K562 (cell line): ENCODE measurements at regions of chr9 and their contacts with region 1.

Region 1: DNA sequence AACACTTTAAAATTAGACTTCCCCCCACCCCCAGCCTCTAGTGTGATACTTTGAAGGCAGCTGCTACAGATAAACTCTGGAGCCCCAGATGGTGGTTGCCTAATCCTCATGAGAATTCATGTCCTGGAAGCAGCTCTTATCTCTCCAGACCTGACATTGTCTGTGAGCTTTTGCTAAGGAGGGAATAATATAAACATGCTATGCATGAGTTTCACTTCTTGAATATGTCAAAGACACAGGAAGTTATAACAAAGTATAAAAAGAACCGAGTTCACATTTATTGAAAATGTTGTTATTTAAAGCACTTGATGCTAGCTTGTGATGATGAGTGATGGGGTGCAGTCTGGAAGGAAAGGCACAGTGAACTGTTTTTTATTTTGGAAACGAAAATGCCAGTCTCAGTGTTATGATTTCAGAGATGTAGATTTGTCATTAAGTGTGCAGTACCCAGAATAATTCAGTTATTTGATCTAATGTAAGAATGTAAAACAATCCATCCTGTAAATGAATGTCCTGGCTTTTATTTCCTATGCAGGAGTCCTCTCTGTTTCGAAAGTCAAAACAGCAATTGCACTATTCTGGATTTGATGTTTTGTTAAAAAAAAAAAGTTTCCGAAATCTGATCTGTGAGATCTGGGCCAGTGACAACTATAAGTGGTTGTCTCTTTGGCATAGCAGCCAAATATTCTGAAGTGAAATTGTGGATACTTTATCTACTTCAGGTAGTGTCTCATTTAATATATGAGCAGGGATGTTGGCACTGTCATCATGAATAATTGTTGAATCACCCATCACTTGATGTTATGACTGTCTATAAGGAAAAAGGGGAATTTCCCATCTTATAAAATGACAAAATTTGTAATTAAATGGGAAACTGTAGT is 77.0 kb downstream of the ZCCHC7 start:
- DNase-seq: peak; percentile 82 to 96 (median 90)
- ATAC-seq: peak; percentile 83
- H3K4me3 ChIP-seq: peak overlapping the region; percentile 5; the same call in 1 of the 2 replicates
- H3K27ac ChIP-seq: peak overlapping the region; percentile 62
- H3K4me1 ChIP-seq: peaks cover 23 to 65% of the 10 kb centered on the region in 2 experiments
- H3K27me3 ChIP-seq: no peaks in the 10 kb centered on the region
- CTCF ChIP-seq: no peak
- EP300 ChIP-seq: peak; percentile 99
- POLR2A ChIP-seq: no peak
- RAD21 ChIP-seq: no peak

Region 2: DNA sequence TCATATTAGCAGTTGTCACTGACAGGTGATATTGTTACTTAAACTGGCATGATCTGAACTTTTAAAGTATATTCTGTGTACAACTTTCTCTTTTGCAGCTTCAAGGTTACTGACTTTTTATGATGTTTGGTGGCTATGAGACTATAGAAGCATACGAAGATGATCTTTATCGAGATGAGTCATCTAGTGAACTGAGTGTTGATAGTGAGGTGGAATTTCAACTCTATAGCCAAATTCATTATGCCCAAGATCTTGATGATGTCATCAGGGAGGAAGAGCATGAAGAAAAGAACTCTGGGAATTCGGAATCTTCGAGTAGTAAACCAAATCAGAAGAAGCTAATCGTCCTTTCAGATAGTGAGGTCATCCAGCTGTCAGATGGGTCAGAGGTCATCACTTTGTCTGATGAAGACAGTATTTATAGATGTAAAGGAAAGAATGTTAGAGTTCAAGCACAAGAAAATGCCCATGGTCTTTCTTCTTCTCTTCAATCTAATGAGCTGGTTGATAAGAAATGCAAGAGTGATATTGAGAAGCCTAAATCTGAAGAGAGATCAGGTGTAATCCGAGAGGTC is 71.1 kb before region 1 on chr9:
- CTCF ChIA-PET with region 1: no interaction called
- POLR2A ChIA-PET with region 1: interaction called, 16 read pairs
- in situ Hi-C with region 1: no loop called
- intact Hi-C with region 1: loop called (anchors 5 kb)
- DNase-seq: no peak
- ATAC-seq: no peak
- H3K4me3 ChIP-seq: no peak overlapping the region
- H3K27ac ChIP-seq: no peak overlapping the region; the same call in 2 of the 3 replicates
- H3K4me1 ChIP-seq: peaks cover 4 to 11% of the 10 kb centered on the region in 2 experiments; a peak in 4 of 5 replicates
- H3K27me3 ChIP-seq: no peaks in the 10 kb centered on the region
- CTCF ChIP-seq: no peak
- EP300 ChIP-seq: no peak
- POLR2A ChIP-seq: no peak
- RAD21 ChIP-seq: no peak

Region 3: GRCh38 chr9:37248651-37249163 is 51.3 kb after region 1 on chr9:
- CTCF ChIA-PET with region 1: no interaction called
- POLR2A ChIA-PET with region 1: interaction called, 3 read pairs
- in situ Hi-C with region 1: no loop called
- intact Hi-C with region 1: loop called (anchors 5 kb)
- DNase-seq: peak in 1 of 4 experiments; percentile 38
- ATAC-seq: no peak
- H3K4me3 ChIP-seq: no peak overlapping the region
- H3K27ac ChIP-seq: peak overlapping the region; percentile 60; the same call in 2 of the 3 replicates
- H3K4me1 ChIP-seq: peaks cover 5 to 38% of the 10 kb centered on the region in 2 experiments; a peak in 4 of 5 replicates
- H3K27me3 ChIP-seq: no peaks in the 10 kb centered on the region
- CTCF ChIP-seq: no peak
- EP300 ChIP-seq: peak; percentile 15; the same call in 1 of the 2 replicates
- POLR2A ChIP-seq: no peak
- RAD21 ChIP-seq: no peak

Region 4: DNA sequence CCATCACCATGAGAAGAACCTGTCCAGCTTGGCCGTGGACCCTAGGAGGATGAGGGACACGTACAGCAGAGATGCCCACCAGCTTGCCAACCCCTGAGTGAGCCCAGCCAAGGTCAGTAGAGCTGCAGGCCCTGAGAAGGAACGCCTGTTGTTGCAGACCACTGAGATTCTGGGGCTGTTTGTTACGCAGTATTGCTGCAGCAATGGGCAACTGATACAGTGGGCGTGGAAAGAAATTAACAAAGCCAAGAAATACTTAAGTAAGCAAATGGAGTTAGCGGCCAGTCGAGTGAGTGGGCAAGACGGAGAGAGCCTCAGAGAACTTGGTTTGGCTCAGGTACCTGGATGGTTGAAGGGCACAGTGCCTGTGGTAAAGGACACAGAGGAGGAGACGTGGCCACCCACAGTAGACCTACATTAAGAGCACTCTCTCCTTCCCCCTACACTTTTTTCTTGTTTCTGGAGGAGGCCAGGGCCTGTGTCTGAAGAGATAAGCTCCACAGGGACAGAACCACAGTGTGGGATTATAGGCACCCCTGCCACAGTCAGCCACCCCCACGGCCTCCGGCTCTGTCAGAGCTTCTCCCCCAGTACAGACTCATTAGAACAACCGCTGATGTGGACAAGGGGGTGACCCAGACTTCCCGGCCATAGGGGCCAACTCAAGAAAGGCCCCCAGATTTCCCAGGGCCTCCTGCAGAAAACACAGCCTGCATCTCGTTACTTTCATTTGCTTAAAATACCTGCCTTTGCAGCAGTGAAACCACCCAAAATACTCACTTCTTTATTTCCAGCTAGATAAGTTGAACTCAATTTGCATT is 185.0 kb after region 1 on chr9:
- CTCF ChIA-PET with region 1: no interaction called
- POLR2A ChIA-PET with region 1: no interaction called
- in situ Hi-C with region 1: no loop called
- intact Hi-C with region 1: loop called (anchors 10 kb)
- DNase-seq: peak in 3 of 4 experiments; percentile 41 to 82 (median 79)
- ATAC-seq: peak; percentile 81
- H3K4me3 ChIP-seq: no peak overlapping the region
- H3K27ac ChIP-seq: peak overlapping the region; percentile 44; the same call in 1 of the 3 replicates
- H3K4me1 ChIP-seq: peaks cover 11 to 12% of the 10 kb centered on the region in 2 experiments; a peak in 4 of 5 replicates
- H3K27me3 ChIP-seq: peaks cover 3 to 11% of the 10 kb centered on the region in 2 experiments; a peak in 3 of 5 replicates
- CTCF ChIP-seq: no peak
- EP300 ChIP-seq: peak; percentile 29; the same call in 1 of the 2 replicates
- POLR2A ChIP-seq: no peak
- RAD21 ChIP-seq: no peak